ENCODE measurements at regions of chr2 and their contacts with region 1.

Region 1: DNA sequence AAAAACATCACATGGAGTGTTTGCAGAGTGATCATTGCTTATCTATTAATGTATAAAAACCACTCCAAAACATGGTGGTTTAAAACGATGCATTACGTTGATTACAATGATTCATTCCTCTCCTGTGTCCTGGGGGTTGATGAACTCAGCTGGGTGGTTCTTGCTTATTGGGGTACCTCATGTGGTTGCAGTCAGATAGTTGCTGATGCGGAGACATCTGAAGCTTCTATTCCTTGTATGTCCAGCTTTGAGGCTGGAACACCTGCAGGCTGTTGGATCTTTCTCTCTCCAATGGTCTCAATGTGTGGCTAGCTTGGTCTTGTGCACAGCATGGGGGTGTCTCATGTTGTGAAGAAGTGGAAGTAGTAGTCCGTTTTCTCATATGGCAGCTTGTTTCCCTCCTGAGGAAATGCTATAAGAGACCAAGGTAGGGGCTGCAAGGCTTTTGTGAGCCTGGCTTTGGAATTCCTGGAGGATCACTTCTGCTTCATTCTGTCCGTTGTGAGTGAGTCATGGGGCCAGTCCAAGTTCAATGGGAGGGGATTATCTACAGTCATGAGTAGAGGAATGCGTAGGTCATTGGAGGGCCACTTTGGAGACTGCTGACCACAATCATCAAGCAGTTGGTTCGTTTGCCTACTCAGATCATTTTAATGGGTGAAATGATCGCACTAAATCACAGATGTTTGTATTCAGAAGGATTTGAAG is 601.0 kb downstream of the SLC4A3 start:
- DNase-seq: peak; percentile 98
- H3K4me3 ChIP-seq: peak overlapping the region; percentile 3
- CTCF ChIP-seq: no peak

Region 2: GRCh38 chr2:218312267-218312756 is 1916.1 kb before region 1 on chr2:
- in situ Hi-C with region 1: no loop called
- DNase-seq: no peak
- H3K4me3 ChIP-seq: no peak overlapping the region
- CTCF ChIP-seq: no peak

Region 3: DNA sequence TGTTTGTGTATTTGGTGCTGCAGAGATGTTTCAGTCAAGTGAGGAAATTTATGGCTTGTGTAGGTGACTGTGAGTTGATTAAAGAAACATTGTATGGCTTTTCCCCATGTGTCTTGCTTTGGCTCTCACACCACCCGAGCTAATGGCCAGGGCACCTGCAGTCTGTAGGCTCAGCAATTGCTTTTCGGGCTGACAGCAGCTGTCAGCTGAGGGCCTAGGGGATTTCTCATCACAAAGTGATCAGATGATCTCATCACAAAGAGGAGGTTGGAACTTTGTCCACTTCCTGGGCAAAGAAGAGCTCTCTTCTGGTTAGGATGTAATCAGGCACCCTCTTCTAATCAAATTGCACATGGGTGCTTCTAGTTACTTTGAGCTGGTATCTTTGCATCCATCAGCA is 31.2 kb after region 1 on chr2:
- in situ Hi-C with region 1: loop called (anchors 5 kb)
- DNase-seq: no peak
- H3K4me3 ChIP-seq: no peak overlapping the region
- CTCF ChIP-seq: no peak

Measured in astrocyte of the cerebellum (primary cell).